Activated CD4-positive, alpha-beta T cell treated with anti-CD3 and anti-CD28 coated beads, Interleukin-2, amount 10 ng/mL, durations not matched to agents 7 days and 5 days (primary cell): ENCODE measurements at regions of chr16 and their contacts with region 1.

Region 1: DNA sequence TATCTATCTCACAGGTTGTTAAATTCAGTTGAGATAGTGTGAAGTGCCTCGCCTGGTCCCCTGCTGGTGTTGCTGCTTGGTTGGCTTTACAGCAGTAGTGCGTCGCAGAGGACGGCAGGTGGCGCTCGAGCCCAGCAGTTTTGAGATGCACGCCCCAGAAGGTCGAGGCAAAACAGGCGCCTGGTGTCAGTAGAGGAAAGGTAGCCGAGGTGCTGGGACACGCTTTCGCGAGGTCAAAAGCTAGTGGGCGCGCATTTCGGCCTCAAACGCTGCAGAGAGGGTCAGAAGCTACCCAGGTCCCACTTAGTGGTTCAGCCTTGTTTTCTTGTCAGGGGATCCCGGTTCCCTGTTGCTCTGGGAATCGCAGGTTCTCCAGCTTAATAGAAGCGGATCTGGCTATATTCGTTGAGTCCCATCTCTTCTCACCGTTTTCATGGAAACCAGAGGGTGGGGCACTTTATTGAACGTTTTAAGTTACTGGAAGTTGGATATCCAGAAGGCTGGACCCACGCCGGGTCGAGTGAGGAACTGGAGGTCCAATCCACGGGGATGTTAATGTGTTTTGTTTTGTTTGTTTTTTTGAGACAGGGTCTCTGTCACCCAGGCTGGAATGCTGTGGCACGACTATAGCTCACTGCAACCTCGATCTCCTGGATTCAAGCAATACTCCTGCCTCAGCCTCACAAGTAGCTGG is 10.3 kb upstream of the ZFP90 start:
- DNase-seq: peak; percentile 92
- H3K4me3 Mint-ChIP-seq: peak overlapping the region; percentile 82
- H3K27ac Mint-ChIP-seq: peak overlapping the region; percentile 47
- H3K4me1 Mint-ChIP-seq: peaks cover 25% of the 10 kb centered on the region
- H3K27me3 Mint-ChIP-seq: no peaks in the 10 kb centered on the region

Region 2: DNA sequence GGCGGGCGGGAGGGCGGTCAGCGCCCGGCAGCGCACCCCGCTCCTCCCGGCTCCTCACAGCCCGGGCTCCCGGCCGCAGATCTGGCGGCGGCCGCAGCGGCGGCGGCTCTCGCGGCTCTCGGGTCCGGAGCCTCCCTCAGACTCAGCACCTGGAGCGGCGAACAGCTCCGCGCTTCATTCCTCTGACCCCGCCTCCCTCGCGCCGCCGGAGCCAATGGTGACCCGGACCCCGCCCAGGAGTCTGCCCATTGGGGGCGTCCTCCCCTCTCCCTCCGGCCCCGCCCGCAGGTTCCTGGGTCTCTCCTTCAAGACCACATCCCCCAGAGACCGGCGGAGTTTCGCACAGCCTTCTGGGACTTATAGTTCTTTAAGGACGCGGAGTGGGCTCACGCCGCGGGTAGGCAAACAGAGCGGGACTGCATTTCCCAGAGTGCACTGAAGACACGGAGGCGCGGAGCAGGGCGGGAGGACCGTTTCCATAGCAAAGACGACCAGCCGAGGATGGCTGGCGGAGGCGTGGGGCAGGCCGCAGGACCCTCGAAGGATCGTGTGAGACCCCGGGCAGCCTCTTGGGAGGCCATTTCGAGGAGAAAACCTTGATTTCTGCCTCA is 80.4 kb before region 1 on chr16 and contains the start of gene SMPD3:
- CTCF ChIA-PET with region 1: no interaction called
- POLR2A ChIA-PET with region 1: no interaction called
- DNase-seq: peak; percentile 100
- H3K4me3 Mint-ChIP-seq: peak within 1 kb of the TSS; percentile 66
- H3K27ac Mint-ChIP-seq: no peak within 1 kb of the TSS
- H3K4me1 Mint-ChIP-seq: peaks cover 16% of the 10 kb centered on the region
- H3K27me3 Mint-ChIP-seq: peaks cover 36% of the 10 kb centered on the region
- total RNA-seq, gene SMPD3: 4.1 to 4.6 TPM

Region 3: DNA sequence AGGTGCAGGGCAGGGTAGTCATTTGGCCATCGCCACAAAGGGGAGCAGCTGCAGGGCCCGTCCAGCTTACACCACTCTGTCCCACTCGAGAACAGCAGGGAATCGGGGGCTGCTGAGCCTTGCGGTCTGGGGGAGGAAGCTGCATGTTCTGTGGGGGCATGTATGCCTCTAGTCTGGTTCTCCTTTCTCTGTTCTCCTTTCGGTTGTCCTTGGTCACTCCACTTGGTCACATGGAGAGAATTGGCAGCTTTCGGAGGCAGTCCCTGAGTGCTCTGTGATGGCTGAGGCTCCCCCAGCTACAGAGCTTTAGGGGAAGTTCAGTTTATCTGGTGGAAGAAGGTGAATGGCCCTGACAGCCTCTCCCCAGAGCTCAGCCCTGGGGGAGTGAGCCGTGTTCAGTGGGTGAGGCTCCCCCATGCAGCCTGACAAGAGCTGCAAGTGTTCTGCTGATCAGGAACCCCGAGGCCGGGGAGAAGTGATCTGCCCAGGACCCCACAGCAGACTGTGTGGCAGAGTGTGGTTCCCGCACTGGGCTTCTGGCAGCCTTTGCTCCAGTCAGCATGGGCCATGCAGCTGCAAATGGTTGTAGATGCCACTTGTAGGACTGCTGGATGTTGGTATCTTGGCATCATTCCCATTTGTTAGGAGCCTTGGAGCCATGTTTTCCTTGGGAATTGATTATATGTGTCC is 58.2 kb before region 1 on chr16:
- CTCF ChIA-PET with region 1: no interaction called
- POLR2A ChIA-PET with region 1: no interaction called
- DNase-seq: no peak
- H3K4me3 Mint-ChIP-seq: peak overlapping the region; percentile 60
- H3K27ac Mint-ChIP-seq: peak overlapping the region; percentile 90
- H3K4me1 Mint-ChIP-seq: peaks cover 48% of the 10 kb centered on the region
- H3K27me3 Mint-ChIP-seq: peaks cover 8% of the 10 kb centered on the region

Region 4: DNA sequence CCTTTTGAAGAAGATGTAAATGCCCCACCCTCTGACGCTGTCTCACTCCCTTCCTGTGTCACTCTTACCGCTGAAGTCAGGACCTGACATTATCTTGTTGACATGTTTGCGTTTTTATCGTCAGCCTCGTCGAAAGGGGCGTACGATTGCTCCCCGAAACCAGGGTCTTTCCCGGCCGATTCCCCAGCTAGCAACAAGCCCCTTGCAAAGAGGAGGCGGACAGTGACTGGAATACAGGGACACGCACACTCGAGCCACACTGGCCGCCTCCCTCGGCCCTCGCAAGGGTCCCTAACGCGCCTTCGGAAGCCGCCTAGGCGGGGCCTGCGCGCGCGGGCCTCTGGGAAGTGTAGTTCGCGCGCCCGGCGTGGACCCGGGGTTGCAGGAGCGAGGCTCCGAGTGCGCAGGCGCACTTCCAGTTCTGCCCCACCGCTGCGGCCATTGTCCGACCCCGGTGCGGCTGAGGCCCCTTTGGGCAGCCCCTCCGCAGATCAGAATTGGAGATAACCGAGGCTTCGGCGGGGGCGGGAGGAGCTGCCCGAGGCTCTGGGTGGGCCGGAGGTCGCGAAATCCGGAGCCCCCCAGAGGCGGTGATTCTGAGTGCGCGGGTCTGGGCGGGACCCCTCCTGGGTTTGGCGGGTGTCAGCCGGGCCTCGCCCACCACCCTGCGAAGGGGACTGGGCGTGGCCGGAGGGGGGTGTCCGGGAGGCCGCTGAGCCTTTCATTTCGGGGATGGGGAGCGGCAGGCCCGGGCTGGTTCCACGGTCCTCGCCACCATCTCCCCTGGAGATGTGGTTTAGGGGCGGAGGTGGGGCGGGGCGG is 10.3 kb after region 1 on chr16 and contains the start of gene ZFP90:
- CTCF ChIA-PET with region 1: interaction called, 10 read pairs
- POLR2A ChIA-PET with region 1: no interaction called
- DNase-seq: peak; percentile 86
- H3K4me3 Mint-ChIP-seq: peak within 1 kb of the TSS; percentile 94
- H3K27ac Mint-ChIP-seq: peak within 1 kb of the TSS; percentile 99
- H3K4me1 Mint-ChIP-seq: peaks cover 22% of the 10 kb centered on the region
- H3K27me3 Mint-ChIP-seq: no peaks in the 10 kb centered on the region
- total RNA-seq, gene ZFP90: 36.0 to 37.8 TPM

Region 5: GRCh38 chr16:68564367-68564985 is 35.6 kb after region 1 on chr16:
- CTCF ChIA-PET with region 1: no interaction called
- POLR2A ChIA-PET with region 1: no interaction called
- DNase-seq: no peak
- H3K4me3 Mint-ChIP-seq: no peak overlapping the region
- H3K27ac Mint-ChIP-seq: no peak overlapping the region
- H3K4me1 Mint-ChIP-seq: no peaks in the 10 kb centered on the region
- H3K27me3 Mint-ChIP-seq: no peaks in the 10 kb centered on the region

Region 6: GRCh38 chr16:68590201-68590994 is 61.6 kb after region 1 on chr16:
- CTCF ChIA-PET with region 1: interaction called, 16 read pairs
- POLR2A ChIA-PET with region 1: no interaction called
- DNase-seq: peak; percentile 57
- H3K4me3 Mint-ChIP-seq: no peak overlapping the region
- H3K27ac Mint-ChIP-seq: no peak overlapping the region
- H3K4me1 Mint-ChIP-seq: peaks cover 3% of the 10 kb centered on the region
- H3K27me3 Mint-ChIP-seq: no peaks in the 10 kb centered on the region